H1 (cell line): ENCODE measurements at regions of chr19 and their contacts with region 1.

Region 1: GRCh38 chr19:38387550-38388348 is at the start of gene GGN:
- DNase-seq: peak; percentile 95 to 98
- H3K4me3 ChIP-seq: peak within 1 kb of the TSS; percentile 93 to 98 (median 96)
- H3K27ac ChIP-seq: peak within 1 kb of the TSS; percentile 74
- H3K4me1 ChIP-seq: peaks cover 10 to 23% (median 14%) of the 10 kb centered on the region in 4 experiments
- H3K27me3 ChIP-seq: no peaks in the 10 kb centered on the region
- CTCF ChIP-seq: no peak
- EP300 ChIP-seq: no peak
- POLR2A ChIP-seq: no peak
- RAD21 ChIP-seq: no peak
- total RNA-seq, gene GGN: 1.2 and 2.7 TPM in 2 replicates

Region 2: DNA sequence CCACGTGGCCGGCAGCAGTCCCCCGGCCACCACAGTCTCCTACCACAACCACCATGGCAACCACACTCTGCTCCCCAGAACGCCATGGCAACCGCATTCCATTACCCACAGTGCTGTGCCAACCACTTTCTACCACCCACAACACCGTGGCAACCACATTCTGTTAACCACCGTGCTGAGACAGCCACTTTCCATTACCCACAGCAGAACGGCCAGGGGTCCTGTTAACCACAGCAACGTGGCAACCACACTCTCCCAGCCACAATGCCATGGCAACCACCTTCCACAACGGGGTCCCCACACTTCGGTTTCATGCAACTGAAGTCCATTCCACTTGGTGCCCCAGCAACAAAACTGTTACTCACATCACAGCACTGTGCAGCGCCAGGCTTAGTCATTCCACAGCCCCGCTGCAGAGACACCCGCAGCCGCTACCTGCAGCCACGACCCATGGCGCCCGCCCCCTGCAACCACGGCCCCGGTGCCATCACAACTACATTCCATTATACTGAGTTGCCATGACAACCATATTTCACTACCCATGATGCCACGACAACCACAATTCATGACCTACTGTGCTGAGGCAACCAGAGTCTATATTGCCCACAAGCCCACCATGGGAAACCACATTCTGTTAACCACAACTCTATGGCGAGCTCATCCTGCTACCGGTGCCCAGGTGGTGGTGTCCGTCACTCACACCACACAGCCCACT is 173.7 kb before region 1 on chr19:
- CTCF ChIA-PET with region 1: no interaction called
- POLR2A ChIA-PET with region 1: no interaction called
- DNase-seq: no peak
- H3K4me3 ChIP-seq: no peak overlapping the region
- H3K27ac ChIP-seq: no peak overlapping the region; the same call in 1 of the 2 replicates
- H3K4me1 ChIP-seq: peaks cover 0 to 16% (median 7%) of the 10 kb centered on the region in 4 experiments; a peak in 6 of 7 replicates
- H3K27me3 ChIP-seq: no peaks in the 10 kb centered on the region
- CTCF ChIP-seq: no peak
- EP300 ChIP-seq: peak in 1 of 2 experiments; percentile 70; a peak in 1 of 3 replicates
- POLR2A ChIP-seq: no peak
- RAD21 ChIP-seq: no peak

Region 3: DNA sequence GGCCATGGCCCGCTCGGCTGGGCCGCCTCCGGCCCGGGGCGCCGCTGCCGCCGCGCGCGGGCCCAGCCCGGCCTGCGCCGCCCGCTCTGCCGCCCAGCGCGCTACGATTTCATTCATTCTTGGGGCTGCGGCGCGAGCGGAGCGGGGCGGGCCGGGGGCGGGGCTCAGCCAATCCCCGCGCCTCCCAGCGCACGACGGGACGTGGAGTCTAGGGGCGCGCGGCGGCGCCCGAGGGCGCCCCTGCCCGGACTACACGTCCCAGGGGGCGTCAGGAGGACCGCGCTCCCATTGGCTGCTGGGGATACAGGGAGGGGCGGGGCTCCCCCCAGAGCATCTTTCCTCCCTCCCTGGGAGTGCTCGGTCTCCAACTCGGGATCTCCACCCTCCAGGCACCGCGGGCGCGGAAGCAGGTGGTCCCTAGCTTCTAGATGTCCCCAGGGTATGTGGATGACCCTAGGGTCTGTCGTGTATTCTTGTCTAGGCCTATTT is 158.1 kb before region 1 on chr19:
- CTCF ChIA-PET with region 1: interaction called, 24 read pairs
- POLR2A ChIA-PET with region 1: interaction called, 6 read pairs
- DNase-seq: peak in 1 of 2 experiments; percentile 85
- H3K4me3 ChIP-seq: peak overlapping the region; percentile 5 to 86 (median 40); a peak in 5 of 8 replicates
- H3K27ac ChIP-seq: no peak overlapping the region
- H3K4me1 ChIP-seq: peaks cover 6 to 19% (median 13%) of the 10 kb centered on the region in 4 experiments
- H3K27me3 ChIP-seq: peaks cover 0 to 10% (median 5%) of the 10 kb centered on the region in 4 experiments; a peak in 3 of 7 replicates
- CTCF ChIP-seq: no peak
- EP300 ChIP-seq: no peak
- POLR2A ChIP-seq: no peak
- RAD21 ChIP-seq: no peak

Region 4: GRCh38 chr19:38351865-38352395 is 35.8 kb before region 1 on chr19:
- CTCF ChIA-PET with region 1: interaction called, 15 read pairs
- POLR2A ChIA-PET with region 1: interaction called, 3 read pairs
- DNase-seq: no peak
- H3K4me3 ChIP-seq: no peak overlapping the region
- H3K27ac ChIP-seq: no peak overlapping the region
- H3K4me1 ChIP-seq: no peaks in the 10 kb centered on the region
- H3K27me3 ChIP-seq: no peaks in the 10 kb centered on the region; a peak in 1 of 7 replicates
- CTCF ChIP-seq: no peak
- EP300 ChIP-seq: no peak
- POLR2A ChIP-seq: no peak
- RAD21 ChIP-seq: no peak

Region 5: DNA sequence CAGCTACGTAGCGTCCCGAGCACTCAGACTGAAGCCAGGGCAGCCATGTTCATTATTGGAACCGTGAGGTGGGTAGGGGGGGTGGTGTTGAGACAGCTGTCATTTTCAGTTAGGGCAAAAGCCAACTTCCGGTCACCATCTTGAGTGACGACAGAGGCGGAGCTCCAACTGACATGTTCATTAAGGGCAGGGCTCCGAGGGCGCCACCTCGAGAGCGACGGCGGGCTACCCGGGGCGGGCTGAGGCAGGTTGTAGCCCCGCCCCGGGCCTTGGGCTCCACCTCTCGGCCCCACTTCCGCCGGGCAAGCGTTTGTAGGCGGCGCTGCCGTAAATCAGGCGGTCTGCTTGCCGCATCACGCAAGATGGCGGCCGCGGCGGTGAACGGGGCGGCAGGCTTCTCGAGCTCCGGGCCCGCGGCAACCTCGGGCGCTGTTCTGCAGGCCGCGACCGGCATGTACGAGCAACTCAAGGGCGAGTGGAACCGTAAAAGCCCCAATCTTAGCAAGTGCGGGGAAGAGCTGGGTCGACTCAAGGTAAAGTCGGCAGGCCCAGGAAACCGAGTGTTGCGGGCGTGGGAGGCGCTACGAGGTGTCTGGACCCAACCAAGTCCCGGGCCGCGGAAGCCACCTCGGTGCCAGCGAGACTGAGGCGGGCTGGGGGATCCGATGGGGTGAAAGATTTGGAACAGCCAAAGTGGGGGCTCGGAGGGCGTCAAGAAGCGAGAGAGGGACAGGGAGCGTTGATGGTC is 13.1 kb before region 1 on chr19 and contains the start of gene PSMD8:
- CTCF ChIA-PET with region 1: interaction called, 37 read pairs
- POLR2A ChIA-PET with region 1: interaction called, 35 read pairs
- DNase-seq: peak; percentile 96 to 99
- H3K4me3 ChIP-seq: peak within 1 kb of the TSS; percentile 85 to 96 (median 90)
- H3K27ac ChIP-seq: peak within 1 kb of the TSS; percentile 62; the same call in 1 of the 2 replicates
- H3K4me1 ChIP-seq: peaks cover 0 to 6% (median 3%) of the 10 kb centered on the region in 4 experiments; a peak in 3 of 7 replicates
- H3K27me3 ChIP-seq: peaks cover 0 to 2% (median 0%) of the 10 kb centered on the region in 4 experiments; a peak in 2 of 7 replicates
- CTCF ChIP-seq: peak in 2 of 3 experiments; percentile 14 to 25; a peak in 2 of 4 replicates
- EP300 ChIP-seq: no peak
- POLR2A ChIP-seq: peak; percentile 93 to 94
- RAD21 ChIP-seq: peak; percentile 10 to 13; a peak in 3 of 4 replicates
- total RNA-seq, gene PSMD8: 170 and 183 TPM in 2 replicates

Region 6: DNA sequence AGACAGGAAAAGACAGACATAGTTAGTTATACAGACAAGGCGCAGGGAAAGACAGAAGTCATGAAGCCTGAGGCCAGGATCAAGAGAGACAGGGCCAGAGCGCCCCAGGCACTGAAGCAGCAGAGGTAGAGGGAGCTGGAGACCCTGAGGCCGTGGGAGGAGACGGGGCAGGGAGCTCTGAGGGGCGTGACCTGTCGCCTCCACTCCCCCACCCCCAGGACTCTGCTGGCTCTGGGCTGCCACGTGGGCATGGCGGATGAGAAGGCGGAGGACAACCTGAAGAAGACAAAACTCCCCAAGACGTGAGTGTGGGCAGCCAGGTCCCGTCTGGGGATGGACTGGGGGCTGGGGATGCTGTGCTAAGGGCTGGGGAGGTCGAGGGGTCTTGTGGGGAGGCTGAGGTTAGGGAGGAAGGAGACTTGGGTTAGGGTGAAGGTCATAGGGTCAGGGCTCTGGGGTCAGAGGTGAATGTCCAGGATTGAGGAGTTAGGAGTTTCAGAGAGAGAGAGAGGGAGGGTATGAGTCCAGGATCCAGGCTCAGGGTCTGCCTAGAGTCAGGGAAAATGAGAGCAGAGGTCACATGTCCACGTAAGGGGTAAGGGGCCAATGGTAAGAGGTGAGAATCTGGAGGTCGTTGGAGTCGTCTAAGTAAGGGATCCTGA is 76.8 kb after region 1 on chr19:
- CTCF ChIA-PET with region 1: no interaction called
- POLR2A ChIA-PET with region 1: no interaction called
- DNase-seq: no peak
- H3K4me3 ChIP-seq: no peak overlapping the region
- H3K27ac ChIP-seq: no peak overlapping the region
- H3K4me1 ChIP-seq: no peaks in the 10 kb centered on the region
- H3K27me3 ChIP-seq: no peaks in the 10 kb centered on the region
- CTCF ChIP-seq: no peak
- EP300 ChIP-seq: no peak
- POLR2A ChIP-seq: no peak
- RAD21 ChIP-seq: no peak